Transverse colon (tissue), 4 donors: ENCODE measurements at regions of chr2 and their contacts with region 1.

Region 1: GRCh38 chr2:147636238-147636882 is 208.5 kb upstream of the ACVR2A start:
- DNase-seq: no peak
- H3K4me3 ChIP-seq: no peak overlapping the region
- H3K27ac ChIP-seq: peak overlapping the region; percentile 2 to 47 (median 12)
- H3K4me1 ChIP-seq: peaks cover 12 to 32% (median 16%) of the 10 kb centered on the region in 4 donors
- H3K27me3 ChIP-seq: no peaks in the 10 kb centered on the region
- CTCF ChIP-seq: no peak
- EP300 ChIP-seq: no peak
- POLR2A ChIP-seq: no peak

Region 2: GRCh38 chr2:146370826-146371225 is 1265.5 kb before region 1 on chr2:
- in situ Hi-C with region 1: no loop called
- intact Hi-C with region 1: loop called (anchors 5 kb)
- DNase-seq: no peak
- H3K4me3 ChIP-seq: no peak overlapping the region
- H3K27ac ChIP-seq: no peak overlapping the region
- H3K4me1 ChIP-seq: no peaks in the 10 kb centered on the region
- H3K27me3 ChIP-seq: no peaks in the 10 kb centered on the region
- CTCF ChIP-seq: no peak
- EP300 ChIP-seq: no peak
- POLR2A ChIP-seq: no peak

Region 3: GRCh38 chr2:146734042-146734820 is 902.1 kb before region 1 on chr2:
- in situ Hi-C with region 1: loop called in 1 of 4 experiments (anchors 25 kb)
- intact Hi-C with region 1: no loop called
- DNase-seq: no peak
- H3K4me3 ChIP-seq: no peak overlapping the region
- H3K27ac ChIP-seq: no peak overlapping the region
- H3K4me1 ChIP-seq: peaks cover 0 to 5% (median 0%) of the 10 kb centered on the region in 4 donors
- H3K27me3 ChIP-seq: no peaks in the 10 kb centered on the region
- CTCF ChIP-seq: peak; percentile 35 to 52 (median 49)
- EP300 ChIP-seq: no peak
- POLR2A ChIP-seq: no peak

Region 4: DNA sequence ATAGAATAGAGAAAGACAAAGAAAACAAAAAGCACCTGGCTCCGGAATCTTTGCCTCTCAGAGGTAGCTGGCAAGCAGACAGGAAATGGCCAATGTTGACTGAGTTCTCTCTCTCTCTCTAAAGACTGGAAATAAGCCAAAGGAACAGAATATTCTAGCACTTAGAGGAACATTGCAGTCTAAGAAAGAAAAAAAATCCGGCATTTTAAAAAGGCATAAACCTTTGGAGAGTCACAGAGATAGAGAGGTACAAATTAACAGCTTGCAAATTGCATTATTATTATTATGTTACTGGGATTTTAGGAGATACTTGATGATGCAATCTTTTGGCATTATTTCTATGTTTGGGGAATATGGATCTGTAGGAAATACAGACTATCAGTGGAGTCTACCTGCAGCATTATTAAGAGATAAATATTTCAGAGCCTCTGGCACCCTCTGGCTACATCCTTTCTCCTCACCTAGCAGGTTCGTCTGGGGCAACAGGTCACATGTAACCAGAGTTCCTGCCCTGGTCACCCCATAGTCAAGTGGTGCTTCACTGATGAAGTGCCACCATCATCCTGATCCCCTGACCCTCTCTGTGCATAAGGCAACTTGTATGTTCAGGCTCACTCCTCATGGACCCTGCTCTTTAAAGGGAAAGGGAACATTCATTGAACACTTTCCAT is 110.4 kb before region 1 on chr2:
- in situ Hi-C with region 1: no loop called
- intact Hi-C with region 1: no loop called
- DNase-seq: no peak
- H3K4me3 ChIP-seq: no peak overlapping the region
- H3K27ac ChIP-seq: no peak overlapping the region
- H3K4me1 ChIP-seq: peaks cover 0 to 1% (median 0%) of the 10 kb centered on the region in 4 donors
- H3K27me3 ChIP-seq: no peaks in the 10 kb centered on the region
- CTCF ChIP-seq: no peak
- EP300 ChIP-seq: no peak
- POLR2A ChIP-seq: no peak